Activated CD4-positive, alpha-beta T cell treated with anti-CD3 and anti-CD28 coated beads for 36 hours (primary cell): ENCODE measurements at regions of chr1 and their contacts with region 1.

Region 1: DNA sequence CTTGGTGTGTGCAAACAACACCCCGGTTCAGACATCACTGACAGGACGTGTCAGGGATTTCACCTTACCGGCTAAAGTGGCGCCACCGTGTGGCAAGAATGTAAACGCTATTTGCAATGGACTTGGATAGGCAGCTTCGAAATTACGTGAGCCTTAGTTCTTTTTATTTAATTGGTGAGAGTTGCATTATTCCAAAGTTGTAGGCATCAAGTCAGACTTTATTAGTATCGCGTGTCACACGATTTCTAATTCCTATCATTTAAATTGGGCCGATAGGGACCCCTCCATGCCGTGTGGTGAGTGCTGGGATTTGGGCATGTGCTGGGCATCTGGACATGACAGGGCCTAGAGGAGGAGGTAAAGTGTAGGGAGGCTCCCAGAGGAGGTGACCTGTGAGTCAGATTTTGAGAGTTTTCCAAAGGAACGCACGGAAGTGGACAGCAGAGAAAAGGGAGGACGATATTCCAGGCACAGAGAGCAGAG is 14.5 kb upstream of the CPT2 start:
- DNase-seq: peak; percentile 93
- ATAC-seq: peak; percentile 95
- H3K4me3 Mint-ChIP-seq: no peak overlapping the region
- H3K27ac Mint-ChIP-seq: no peak overlapping the region
- H3K4me1 Mint-ChIP-seq: no peaks in the 10 kb centered on the region
- H3K27me3 Mint-ChIP-seq: peaks cover 3% of the 10 kb centered on the region

Region 2: GRCh38 chr1:52842643-52843309 is 339.4 kb before region 1 on chr1 and contains the start of gene ZYG11A:
- CTCF ChIA-PET with region 1: no interaction called
- POLR2A ChIA-PET with region 1: no interaction called
- intact Hi-C with region 1: loop called in 1 of 2 experiments (anchors 2 kb)
- DNase-seq: peak; percentile 89
- ATAC-seq: peak; percentile 98
- H3K4me3 Mint-ChIP-seq: peak within 1 kb of the TSS; percentile 58
- H3K27ac Mint-ChIP-seq: no peak within 1 kb of the TSS
- H3K4me1 Mint-ChIP-seq: peaks cover 5% of the 10 kb centered on the region
- H3K27me3 Mint-ChIP-seq: peaks cover 18% of the 10 kb centered on the region
- total RNA-seq, gene ZYG11A: 0.11 to 0.25 TPM

Region 3: DNA sequence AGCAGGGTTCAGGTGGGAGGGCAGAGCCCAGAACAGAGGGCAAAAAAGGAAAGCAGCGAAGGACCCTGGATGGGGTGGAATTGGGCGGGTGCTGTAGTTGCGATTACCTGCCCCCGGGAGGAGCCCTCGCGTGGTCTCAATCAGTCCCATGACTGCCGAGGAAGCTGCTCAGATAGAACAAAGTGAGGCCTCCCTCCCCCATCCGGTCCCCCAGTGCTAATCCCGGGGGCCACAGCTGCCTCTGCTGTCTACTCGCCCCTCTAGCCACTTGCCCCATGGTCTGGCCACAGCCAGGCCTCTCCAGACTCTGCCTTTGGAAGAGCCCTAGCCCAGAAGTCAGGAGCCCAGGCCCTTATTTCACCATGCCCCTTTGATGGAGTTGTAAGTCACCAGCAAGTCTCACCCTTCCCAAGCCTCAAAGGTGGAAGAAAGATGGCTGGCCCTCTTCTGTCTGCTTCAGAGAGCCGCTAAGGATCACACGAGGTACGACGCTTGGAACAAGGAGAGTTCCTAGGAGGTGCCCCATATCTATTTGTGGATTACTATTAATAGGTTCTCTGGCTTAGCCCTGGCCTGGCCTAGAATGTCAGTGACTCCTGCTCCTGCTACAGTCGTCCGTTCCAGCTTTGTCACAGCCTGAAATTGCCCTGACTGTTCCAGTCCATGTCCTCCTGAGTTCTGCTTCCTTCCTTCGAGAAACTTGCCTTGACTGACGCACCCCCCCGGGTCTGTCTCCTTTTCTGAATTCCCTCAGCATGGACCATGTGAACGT is 277.0 kb before region 1 on chr1:
- CTCF ChIA-PET with region 1: interaction called, 3 read pairs
- POLR2A ChIA-PET with region 1: no interaction called
- intact Hi-C with region 1: loop called (anchors 1 to 5 kb)
- DNase-seq: peak; percentile 68
- ATAC-seq: peak; percentile 88
- H3K4me3 Mint-ChIP-seq: no peak overlapping the region
- H3K27ac Mint-ChIP-seq: no peak overlapping the region
- H3K4me1 Mint-ChIP-seq: no peaks in the 10 kb centered on the region
- H3K27me3 Mint-ChIP-seq: no peaks in the 10 kb centered on the region

Region 4: DNA sequence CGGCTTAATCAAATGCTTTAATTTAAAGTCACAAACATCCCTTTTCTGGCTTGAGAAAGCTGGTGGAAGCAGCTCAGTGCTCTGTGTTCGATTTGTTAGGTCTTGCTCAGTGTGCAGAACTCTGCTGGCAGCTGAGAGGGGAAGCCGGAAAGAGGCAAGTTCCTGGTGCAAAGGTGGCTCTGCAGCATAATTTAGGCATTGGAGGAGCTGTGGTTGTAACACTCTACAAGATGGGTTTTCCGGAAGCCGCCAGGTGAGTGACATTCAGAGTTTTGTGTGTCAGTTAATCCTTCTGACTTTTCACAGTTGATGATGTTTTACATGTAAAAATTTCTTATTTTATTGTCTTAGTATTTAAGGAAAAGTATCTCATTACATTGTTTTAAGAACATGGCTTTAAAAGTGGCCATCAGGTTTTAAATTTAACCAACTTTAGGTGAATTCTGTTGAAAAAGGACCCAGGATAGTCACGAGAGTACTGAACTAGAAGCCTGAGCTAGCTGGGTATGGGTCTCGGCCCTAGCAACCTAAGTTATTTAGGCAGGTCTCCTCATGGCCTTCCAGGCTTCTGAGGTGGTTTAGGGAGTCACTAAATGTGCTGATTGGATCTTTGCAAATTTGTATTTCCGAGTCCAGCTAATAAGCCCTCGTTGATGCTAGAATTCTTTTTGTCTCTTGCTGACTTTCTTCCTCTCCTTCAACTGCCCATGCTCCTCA is 167.2 kb before region 1 on chr1:
- CTCF ChIA-PET with region 1: interaction called, 7 read pairs
- POLR2A ChIA-PET with region 1: no interaction called
- intact Hi-C with region 1: loop called in 1 of 2 experiments (anchors 1 kb)
- DNase-seq: peak; percentile 84
- ATAC-seq: peak; percentile 99
- H3K4me3 Mint-ChIP-seq: peak overlapping the region; percentile 79
- H3K27ac Mint-ChIP-seq: peak overlapping the region; percentile 89
- H3K4me1 Mint-ChIP-seq: peaks cover 24% of the 10 kb centered on the region
- H3K27me3 Mint-ChIP-seq: no peaks in the 10 kb centered on the region

Region 5: DNA sequence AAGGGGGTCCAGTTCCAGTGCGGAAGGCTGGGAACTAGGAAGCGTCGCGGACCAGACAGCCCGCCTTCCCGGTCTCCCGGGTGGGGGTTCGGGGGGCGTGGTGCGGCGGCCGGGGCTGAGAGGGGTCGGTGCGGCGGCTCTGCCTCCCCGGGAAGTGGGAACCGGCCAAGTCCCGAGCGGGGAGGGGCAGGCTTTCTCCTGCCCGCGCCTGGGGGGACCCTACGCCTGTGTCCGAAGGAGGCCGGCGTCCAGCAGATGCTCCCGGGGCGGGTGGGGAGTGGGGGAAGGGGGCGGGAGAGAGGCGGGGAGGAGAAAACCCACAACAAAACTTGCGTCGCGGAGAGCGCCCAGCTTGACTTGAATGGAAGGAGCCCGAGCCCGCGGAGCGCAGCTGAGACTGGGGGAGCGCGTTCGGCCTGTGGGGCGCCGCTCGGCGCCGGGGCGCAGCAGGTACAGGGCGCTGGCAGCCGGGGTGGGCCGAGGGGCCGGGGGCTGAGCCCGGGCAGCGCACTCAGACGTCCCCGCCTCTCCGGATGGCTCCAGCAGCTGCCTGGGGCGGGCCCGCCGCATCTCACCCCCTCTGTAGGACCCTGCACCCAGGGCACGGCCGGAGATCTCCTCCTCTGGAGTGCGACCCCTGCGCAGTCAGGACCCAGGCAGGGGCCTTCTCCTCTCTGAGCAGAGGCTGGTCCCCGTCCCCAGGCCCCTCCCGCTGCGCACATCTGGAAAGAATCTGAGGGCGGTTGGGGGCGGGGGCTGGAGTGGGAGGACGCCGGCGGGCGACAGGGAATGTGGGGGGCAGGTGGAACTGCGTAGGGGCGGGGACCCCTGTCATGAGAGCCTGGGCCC is 120.1 kb before region 1 on chr1 and contains the start of gene PODN:
- CTCF ChIA-PET with region 1: interaction called, 3 read pairs
- POLR2A ChIA-PET with region 1: no interaction called
- intact Hi-C with region 1: loop called in 1 of 2 experiments (anchors 10 kb)
- DNase-seq: peak; percentile 34
- ATAC-seq: peak; percentile 47
- H3K4me3 Mint-ChIP-seq: peak within 1 kb of the TSS; percentile 40
- H3K27ac Mint-ChIP-seq: no peak within 1 kb of the TSS
- H3K4me1 Mint-ChIP-seq: peaks cover 4% of the 10 kb centered on the region
- H3K27me3 Mint-ChIP-seq: peaks cover 37% of the 10 kb centered on the region
- total RNA-seq, gene PODN: not detected

Region 6: DNA sequence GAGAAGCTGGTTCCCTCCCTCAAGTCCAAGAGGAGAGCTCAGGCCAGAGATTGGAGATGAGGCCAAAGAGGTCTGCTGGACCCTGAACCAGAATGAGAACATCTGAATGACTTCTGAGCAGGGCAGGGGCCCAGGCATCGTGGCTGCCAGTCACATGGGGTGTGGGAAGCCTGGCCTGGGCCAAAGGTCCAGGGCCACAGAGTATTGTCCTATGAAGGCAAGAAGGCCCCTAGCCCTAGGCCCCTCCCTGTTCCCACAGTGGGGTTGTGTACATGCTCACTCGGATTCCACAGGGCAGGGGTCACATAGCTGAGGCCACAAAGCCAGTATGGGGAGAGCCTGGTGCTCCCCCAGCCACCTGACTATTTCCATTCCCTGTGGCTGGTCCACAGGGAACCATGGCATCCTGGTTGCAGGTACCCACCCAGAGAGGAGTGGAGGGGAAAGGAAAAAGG is 21.2 kb before region 1 on chr1:
- CTCF ChIA-PET with region 1: interaction called, 10 read pairs
- POLR2A ChIA-PET with region 1: no interaction called
- intact Hi-C with region 1: no loop called
- DNase-seq: no peak
- ATAC-seq: no peak
- H3K4me3 Mint-ChIP-seq: no peak overlapping the region
- H3K27ac Mint-ChIP-seq: no peak overlapping the region
- H3K4me1 Mint-ChIP-seq: no peaks in the 10 kb centered on the region
- H3K27me3 Mint-ChIP-seq: peaks cover 2% of the 10 kb centered on the region

Region 7: GRCh38 chr1:53526451-53527101 is 344.4 kb after region 1 on chr1:
- CTCF ChIA-PET with region 1: no interaction called
- POLR2A ChIA-PET with region 1: no interaction called
- intact Hi-C with region 1: no loop called
- DNase-seq: no peak
- ATAC-seq: no peak
- H3K4me3 Mint-ChIP-seq: no peak overlapping the region
- H3K27ac Mint-ChIP-seq: no peak overlapping the region
- H3K4me1 Mint-ChIP-seq: no peaks in the 10 kb centered on the region
- H3K27me3 Mint-ChIP-seq: no peaks in the 10 kb centered on the region

Region 8: DNA sequence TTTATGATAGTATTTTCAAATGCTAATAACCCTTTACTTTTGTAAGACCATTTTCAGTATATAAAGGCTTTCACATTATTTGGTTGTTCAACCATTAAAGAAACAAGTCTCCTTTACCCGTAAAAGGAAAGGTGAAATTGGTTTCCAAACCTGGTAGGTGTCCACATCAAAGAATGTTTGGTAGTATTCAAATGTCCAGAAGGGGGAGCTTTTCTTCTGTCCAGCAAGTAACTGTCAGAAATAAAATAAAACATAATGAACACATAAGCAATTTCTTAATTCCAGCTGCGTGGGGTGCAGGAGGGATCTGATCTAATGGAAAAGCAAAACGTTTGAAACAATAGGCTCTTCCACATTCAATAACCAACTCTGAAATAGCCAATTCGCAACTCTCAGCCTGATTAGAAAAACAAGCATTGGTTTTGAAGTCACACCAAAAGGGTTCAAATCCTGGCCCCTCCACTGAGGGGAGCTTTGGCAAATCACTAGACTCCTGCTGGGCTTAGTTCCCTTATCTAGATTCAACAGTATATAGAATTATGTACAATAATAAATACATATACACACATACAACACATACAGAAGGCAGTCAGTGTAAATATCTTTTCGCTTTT is 696.4 kb after region 1 on chr1:
- CTCF ChIA-PET with region 1: no interaction called
- POLR2A ChIA-PET with region 1: no interaction called
- intact Hi-C with region 1: no loop called
- DNase-seq: no peak
- ATAC-seq: peak; percentile 36
- H3K4me3 Mint-ChIP-seq: no peak overlapping the region
- H3K27ac Mint-ChIP-seq: no peak overlapping the region
- H3K4me1 Mint-ChIP-seq: peaks cover 4% of the 10 kb centered on the region
- H3K27me3 Mint-ChIP-seq: no peaks in the 10 kb centered on the region